ENCODE measurements at regions of chr4 and their contacts with region 1.

Region 1: DNA sequence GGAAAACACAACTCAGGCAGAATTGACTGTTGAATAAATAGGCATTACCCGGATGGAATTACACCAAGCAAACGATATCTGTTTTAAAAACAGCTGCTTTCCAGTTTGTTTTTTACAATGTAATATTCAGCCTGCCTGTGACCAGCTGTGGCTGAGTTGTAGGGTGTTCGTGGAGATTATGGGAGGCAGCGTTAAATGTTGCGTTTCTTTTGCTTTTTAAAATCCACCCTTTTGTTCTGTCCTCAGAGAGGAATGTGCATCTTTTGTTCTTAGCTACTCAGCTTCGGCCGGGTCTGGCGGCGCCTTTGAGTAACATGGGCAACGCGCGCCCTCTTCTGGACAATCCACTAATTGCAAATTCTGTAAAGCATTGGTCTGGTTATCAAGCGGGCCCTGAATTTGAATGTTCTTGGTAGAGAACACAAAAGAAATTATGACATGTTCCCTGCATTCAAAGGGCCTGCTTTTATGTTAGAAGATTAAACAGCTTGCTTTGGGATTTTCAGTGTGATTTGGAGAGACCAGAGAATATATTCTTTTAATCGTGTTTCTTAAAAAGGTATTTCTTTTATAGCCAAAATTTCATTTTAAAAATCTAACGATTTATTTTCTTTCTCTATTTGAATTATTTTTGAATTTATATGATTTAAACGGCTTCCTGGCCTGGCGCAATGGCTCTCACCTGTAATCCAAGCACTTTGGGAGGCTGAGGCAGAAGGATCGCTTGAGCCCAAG is 76.3 kb upstream of the TRIM2 start:
- DNase-seq: peak; percentile 89
- ATAC-seq: peak; percentile 90
- H3K4me3 ChIP-seq: no peak overlapping the region
- H3K4me3 Mint-ChIP-seq: no peak overlapping the region
- H3K27ac ChIP-seq: no peak overlapping the region
- H3K27ac Mint-ChIP-seq: no peak overlapping the region
- H3K4me1 ChIP-seq: peaks cover 0 to 4% of the 10 kb centered on the region in 2 donors
- H3K4me1 Mint-ChIP-seq: peaks cover 6% of the 10 kb centered on the region
- H3K27me3 ChIP-seq: no peaks in the 10 kb centered on the region
- H3K27me3 Mint-ChIP-seq: no peaks in the 10 kb centered on the region
- CTCF ChIP-seq: peak; percentile 91

Region 2: DNA sequence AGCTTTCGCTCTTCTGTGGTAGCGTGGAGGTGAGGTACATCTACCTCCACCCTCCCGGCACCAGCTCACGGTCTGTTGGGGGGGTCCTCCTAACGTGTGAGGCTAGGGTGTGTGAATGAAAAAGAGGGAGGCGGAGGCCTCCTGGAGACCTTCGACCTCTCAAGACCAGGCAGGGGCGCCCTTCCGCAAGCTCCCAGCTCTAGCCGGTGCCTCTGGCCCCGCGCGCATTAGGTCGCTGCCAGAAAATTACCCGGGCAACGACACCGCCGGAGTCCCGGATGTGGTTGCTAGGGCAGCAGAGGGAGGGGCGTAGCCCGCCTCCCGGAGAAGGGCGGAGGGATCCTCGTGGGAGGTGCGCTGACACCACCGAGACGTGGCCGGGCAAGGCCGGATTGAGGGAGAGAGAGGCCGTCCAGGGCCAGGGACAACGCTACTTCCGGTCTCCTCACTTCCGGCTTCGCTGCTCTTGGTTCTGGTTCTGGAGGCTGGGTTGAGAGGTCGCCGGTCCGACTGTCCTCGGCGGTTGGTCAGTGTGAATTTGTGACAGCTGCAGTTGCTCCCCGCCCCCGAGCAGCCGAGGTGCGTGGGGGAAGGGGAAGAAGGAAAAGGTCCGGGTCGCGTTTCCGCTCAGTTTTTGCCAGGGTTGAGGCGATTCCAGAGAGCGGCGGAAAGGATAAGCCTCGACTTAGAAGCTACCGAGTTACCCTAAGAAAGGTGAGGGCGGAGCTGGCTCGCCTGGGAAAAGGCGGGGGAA is 348.2 kb before region 1 on chr4 and contains the starts of genes ARFIP1 and TIGD4:
- CTCF ChIA-PET with region 1: interaction called, 3 read pairs
- POLR2A ChIA-PET with region 1: no interaction called
- intact Hi-C with region 1: loop called (anchors 2 kb)
- DNase-seq: peak; percentile 95
- ATAC-seq: peak; percentile 89
- H3K4me3 ChIP-seq: peak within 1 kb of the TSS; percentile 59 to 95 (median 90)
- H3K4me3 Mint-ChIP-seq: peak within 1 kb of the TSS; percentile 98
- H3K27ac ChIP-seq: peak within 1 kb of the TSS; percentile 60 to 79
- H3K27ac Mint-ChIP-seq: peak within 1 kb of the TSS; percentile 93
- H3K4me1 ChIP-seq: peaks cover 20 to 25% of the 10 kb centered on the region in 2 donors
- H3K4me1 Mint-ChIP-seq: peaks cover 51% of the 10 kb centered on the region
- H3K27me3 ChIP-seq: no peaks in the 10 kb centered on the region
- H3K27me3 Mint-ChIP-seq: peaks cover 5% of the 10 kb centered on the region
- CTCF ChIP-seq: peak; percentile 9
- total RNA-seq, gene ARFIP1: 23.5 and 27.0 TPM in 2 replicates
- total RNA-seq, gene TIGD4: 0.36 and 0.59 TPM in 2 replicates

Region 3: GRCh38 chr4:152937336-152938236 is 190.3 kb before region 1 on chr4:
- CTCF ChIA-PET with region 1: interaction called, 8 read pairs
- POLR2A ChIA-PET with region 1: no interaction called
- intact Hi-C with region 1: loop called (anchors 2 kb)
- DNase-seq: peak; percentile 67
- ATAC-seq: peak; percentile 55
- H3K4me3 ChIP-seq: peak overlapping the region; percentile 51 to 81 (median 59)
- H3K4me3 Mint-ChIP-seq: peak overlapping the region; percentile 80
- H3K27ac ChIP-seq: no peak overlapping the region
- H3K27ac Mint-ChIP-seq: no peak overlapping the region
- H3K4me1 ChIP-seq: peaks cover 23 to 25% of the 10 kb centered on the region in 2 donors
- H3K4me1 Mint-ChIP-seq: peaks cover 27% of the 10 kb centered on the region
- H3K27me3 ChIP-seq: peaks cover 0 to 56% (median 27%) of the 10 kb centered on the region in 4 experiments
- H3K27me3 Mint-ChIP-seq: peaks cover 59% of the 10 kb centered on the region
- CTCF ChIP-seq: no peak

Region 4: GRCh38 chr4:153089742-153090141 is 38.2 kb before region 1 on chr4:
- CTCF ChIA-PET with region 1: interaction called, 356 read pairs
- POLR2A ChIA-PET with region 1: no interaction called
- intact Hi-C with region 1: no loop called
- DNase-seq: no peak
- ATAC-seq: no peak
- H3K4me3 ChIP-seq: no peak overlapping the region
- H3K4me3 Mint-ChIP-seq: no peak overlapping the region
- H3K27ac ChIP-seq: no peak overlapping the region
- H3K27ac Mint-ChIP-seq: no peak overlapping the region
- H3K4me1 ChIP-seq: peaks cover 3 to 8% of the 10 kb centered on the region in 2 donors
- H3K4me1 Mint-ChIP-seq: peaks cover 6% of the 10 kb centered on the region
- H3K27me3 ChIP-seq: no peaks in the 10 kb centered on the region
- H3K27me3 Mint-ChIP-seq: peaks cover 3% of the 10 kb centered on the region
- CTCF ChIP-seq: no peak

Region 5: DNA sequence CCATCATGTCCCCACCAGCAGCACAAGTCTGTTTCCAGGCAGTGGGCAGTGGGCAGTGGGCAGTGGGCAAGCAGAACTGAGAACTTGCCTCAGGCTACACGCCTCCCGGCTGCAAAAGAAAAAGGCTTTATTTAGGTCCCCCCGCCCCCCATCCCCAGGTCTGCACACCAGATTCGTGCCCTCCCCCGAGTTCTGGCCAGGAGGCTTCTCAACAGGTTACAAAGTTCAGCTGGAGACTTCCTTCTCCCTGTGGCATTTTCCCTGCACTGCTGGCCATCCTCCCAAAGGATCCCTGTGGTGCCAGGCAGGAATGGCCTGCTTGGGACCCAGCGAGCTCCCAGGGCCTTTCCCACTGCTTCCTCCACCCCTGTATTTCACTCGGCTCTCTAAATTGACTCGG is 20.7 kb before region 1 on chr4:
- CTCF ChIA-PET with region 1: interaction called, 89 read pairs
- POLR2A ChIA-PET with region 1: no interaction called
- intact Hi-C with region 1: no loop called
- DNase-seq: no peak
- ATAC-seq: no peak
- H3K4me3 ChIP-seq: no peak overlapping the region
- H3K4me3 Mint-ChIP-seq: no peak overlapping the region
- H3K27ac ChIP-seq: no peak overlapping the region
- H3K27ac Mint-ChIP-seq: no peak overlapping the region
- H3K4me1 ChIP-seq: peaks cover 22 to 37% of the 10 kb centered on the region in 2 donors
- H3K4me1 Mint-ChIP-seq: peaks cover 29% of the 10 kb centered on the region
- H3K27me3 ChIP-seq: peaks cover 0 to 10% (median 6%) of the 10 kb centered on the region in 4 experiments
- H3K27me3 Mint-ChIP-seq: peaks cover 31% of the 10 kb centered on the region
- CTCF ChIP-seq: no peak

Region 6: DNA sequence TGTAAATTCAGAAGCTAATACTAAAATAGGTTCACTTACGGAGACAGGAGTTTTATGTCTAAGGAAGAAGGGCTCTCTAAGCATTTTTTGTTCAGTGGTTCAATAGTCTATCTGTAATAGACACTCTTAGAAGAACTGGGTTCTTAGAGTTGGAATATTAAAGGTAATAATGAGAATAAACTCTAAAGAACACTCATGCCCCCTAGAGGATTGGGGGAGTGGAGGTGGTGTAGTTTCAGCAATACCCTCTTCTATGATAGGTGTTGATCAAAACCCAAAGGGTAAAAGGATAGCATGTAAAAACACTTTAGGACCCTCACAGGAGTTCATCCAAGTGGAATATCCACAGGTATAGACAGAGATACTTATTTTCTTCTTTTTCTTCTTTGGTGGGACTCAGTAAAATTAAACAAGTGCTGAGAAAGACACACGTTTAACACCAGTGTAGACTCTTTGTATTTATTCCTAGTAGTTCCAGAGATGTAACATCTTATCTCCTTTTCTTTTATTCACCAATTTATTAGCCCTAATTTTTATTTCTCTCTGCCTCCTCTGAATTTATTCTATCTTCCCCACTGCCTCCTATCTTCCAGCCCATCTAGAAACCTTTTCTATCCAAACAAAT is 190.9 kb after region 1 on chr4:
- CTCF ChIA-PET with region 1: interaction called, 12 read pairs
- POLR2A ChIA-PET with region 1: no interaction called
- intact Hi-C with region 1: no loop called
- DNase-seq: peak; percentile 57
- ATAC-seq: no peak
- H3K4me3 ChIP-seq: no peak overlapping the region
- H3K4me3 Mint-ChIP-seq: no peak overlapping the region
- H3K27ac ChIP-seq: no peak overlapping the region
- H3K27ac Mint-ChIP-seq: no peak overlapping the region
- H3K4me1 ChIP-seq: no peaks in the 10 kb centered on the region
- H3K4me1 Mint-ChIP-seq: no peaks in the 10 kb centered on the region
- H3K27me3 ChIP-seq: no peaks in the 10 kb centered on the region
- H3K27me3 Mint-ChIP-seq: no peaks in the 10 kb centered on the region
- CTCF ChIP-seq: peak; percentile 78

Measured in B cell (primary cell).